ENCODE measurements at regions of chr1 and their contacts with region 1.

Region 1: DNA sequence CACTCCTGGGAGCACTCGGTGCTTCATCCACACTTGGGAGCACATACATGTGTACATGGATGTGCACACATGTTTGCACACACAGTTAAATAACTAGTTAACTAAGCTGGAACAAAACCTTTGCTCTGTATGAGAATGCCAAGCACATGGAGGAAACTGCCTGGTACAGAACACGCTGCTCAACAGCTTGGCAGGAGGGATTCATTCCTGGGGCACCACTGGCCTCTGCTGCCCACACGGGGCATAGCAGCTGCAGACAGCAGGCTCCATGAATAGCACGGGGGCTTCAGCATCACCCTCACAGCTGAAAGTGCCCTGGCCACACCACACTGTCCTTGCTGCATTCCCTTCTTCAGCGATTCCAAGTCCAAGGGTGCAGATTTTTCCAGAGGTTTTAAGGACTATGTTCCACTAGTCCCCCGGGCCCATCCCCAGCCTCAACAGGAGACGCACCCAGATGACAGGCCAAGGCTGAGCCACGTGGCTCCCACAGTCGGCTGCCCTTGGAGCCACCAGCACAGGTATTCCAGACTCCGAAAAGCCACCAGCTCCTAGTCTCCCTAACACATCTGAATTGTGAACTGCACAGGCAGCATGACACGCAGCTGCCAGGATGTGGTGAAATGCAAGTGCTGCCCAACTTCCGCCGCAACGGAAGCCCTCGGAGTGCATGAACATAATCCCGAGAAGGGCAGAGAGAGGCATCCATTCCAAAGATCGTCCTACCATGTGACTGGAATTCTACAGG is 16.9 kb downstream of the NPHP4 start:
- H3K4me3 Mint-ChIP-seq: no peak overlapping the region
- H3K27ac Mint-ChIP-seq: no peak overlapping the region
- H3K4me1 Mint-ChIP-seq: peaks cover 20% of the 10 kb centered on the region
- H3K27me3 Mint-ChIP-seq: no peaks in the 10 kb centered on the region

Region 2: DNA sequence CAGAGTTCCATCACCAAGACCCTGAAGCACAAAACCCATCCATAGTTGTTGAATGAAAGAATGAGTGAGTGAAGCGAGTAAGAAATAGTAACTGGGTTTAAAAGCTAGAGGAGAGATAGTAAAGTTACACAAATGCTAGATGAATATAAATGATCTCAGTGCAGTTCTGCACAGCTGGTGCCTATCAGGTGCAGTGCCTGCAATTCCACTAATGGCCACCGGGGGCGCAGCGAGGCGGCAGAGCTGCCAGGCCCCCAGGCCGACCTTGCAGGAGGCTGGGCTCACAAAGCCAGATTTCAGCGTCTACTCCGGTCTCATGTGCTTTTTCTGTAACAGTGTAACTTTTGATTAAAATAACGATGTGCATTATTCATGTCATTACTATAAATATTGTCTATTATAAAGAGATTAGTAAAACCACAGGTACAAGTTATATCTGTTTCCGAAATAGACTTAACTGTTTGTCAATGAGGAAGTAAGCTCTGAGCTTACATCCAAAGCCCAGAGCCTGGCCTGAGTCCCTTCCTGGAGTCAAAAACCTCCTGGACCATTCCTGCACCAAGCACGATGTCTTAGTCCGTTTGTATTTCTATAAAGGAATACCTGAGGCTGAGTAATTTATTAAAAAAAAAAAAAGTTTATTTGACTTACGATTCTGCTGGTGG is 460.7 kb before region 1 on chr1:
- intact Hi-C with region 1: loop called (anchors 5 kb)
- H3K4me3 Mint-ChIP-seq: no peak overlapping the region
- H3K27ac Mint-ChIP-seq: no peak overlapping the region
- H3K4me1 Mint-ChIP-seq: peaks cover 10% of the 10 kb centered on the region
- H3K27me3 Mint-ChIP-seq: no peaks in the 10 kb centered on the region

Region 3: DNA sequence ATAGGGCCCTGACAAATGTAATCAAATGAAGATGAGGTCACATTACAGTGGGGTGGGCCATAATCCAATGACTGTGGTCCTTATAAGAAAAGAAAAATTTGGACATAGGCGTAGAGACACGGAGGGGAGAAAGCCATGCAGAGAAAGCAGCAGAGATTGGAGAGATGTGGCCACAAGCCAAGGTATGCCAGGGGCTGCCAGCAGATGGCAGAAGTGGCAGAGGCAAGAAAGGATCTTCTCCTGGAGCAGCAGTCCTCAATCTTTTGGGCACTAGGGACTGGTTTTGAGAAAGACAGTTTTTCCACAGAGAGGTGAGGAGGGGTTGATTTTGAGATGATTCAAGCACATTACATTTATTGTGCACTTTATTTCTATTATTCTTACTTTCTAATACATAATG is 338.1 kb before region 1 on chr1:
- intact Hi-C with region 1: loop called (anchors 5 kb)
- H3K4me3 Mint-ChIP-seq: no peak overlapping the region
- H3K27ac Mint-ChIP-seq: no peak overlapping the region
- H3K4me1 Mint-ChIP-seq: no peaks in the 10 kb centered on the region
- H3K27me3 Mint-ChIP-seq: peaks cover 5% of the 10 kb centered on the region

Region 4: GRCh38 chr1:5927506-5928370 is 47.6 kb before region 1 on chr1:
- intact Hi-C with region 1: no loop called
- H3K4me3 Mint-ChIP-seq: no peak overlapping the region
- H3K27ac Mint-ChIP-seq: no peak overlapping the region
- H3K4me1 Mint-ChIP-seq: no peaks in the 10 kb centered on the region
- H3K27me3 Mint-ChIP-seq: no peaks in the 10 kb centered on the region